Endothelial cell of umbilical vein (primary cell): ENCODE measurements at regions of chr2 and their contacts with region 1.

Region 1: GRCh38 chr2:23351388-23352141 is 33.4 kb upstream of the KLHL29 start:
- DNase-seq: peak; percentile 74
- H3K4me3 ChIP-seq: no peak overlapping the region
- H3K27ac ChIP-seq: no peak overlapping the region
- H3K4me1 ChIP-seq: peaks cover 2% of the 10 kb centered on the region
- H3K27me3 ChIP-seq: no peaks in the 10 kb centered on the region
- CTCF ChIP-seq: peak; percentile 88 to 96
- POLR2A ChIP-seq: no peak

Region 2: GRCh38 chr2:23306401-23306800 is 45.2 kb before region 1 on chr2:
- CTCF ChIA-PET with region 1: no interaction called
- POLR2A ChIA-PET with region 1: no interaction called
- dilution Hi-C with region 1: no loop called
- intact Hi-C with region 1: no loop called
- DNase-seq: no peak
- H3K4me3 ChIP-seq: no peak overlapping the region
- H3K27ac ChIP-seq: no peak overlapping the region
- H3K4me1 ChIP-seq: no peaks in the 10 kb centered on the region
- H3K27me3 ChIP-seq: no peaks in the 10 kb centered on the region
- CTCF ChIP-seq: no peak
- POLR2A ChIP-seq: no peak

Region 3: GRCh38 chr2:23436346-23437098 is 85.0 kb after region 1 on chr2:
- CTCF ChIA-PET with region 1: no interaction called
- POLR2A ChIA-PET with region 1: no interaction called
- dilution Hi-C with region 1: no loop called
- intact Hi-C with region 1: loop called (anchors 5 kb)
- DNase-seq: peak; percentile 81
- H3K4me3 ChIP-seq: no peak overlapping the region
- H3K27ac ChIP-seq: no peak overlapping the region
- H3K4me1 ChIP-seq: no peaks in the 10 kb centered on the region
- H3K27me3 ChIP-seq: no peaks in the 10 kb centered on the region
- CTCF ChIP-seq: no peak
- POLR2A ChIP-seq: no peak